Activated naive CD4-positive, alpha-beta T cell treated with anti-CD3 and anti-CD28 coated beads for 36 hours (primary cell): ENCODE measurements at regions of chr5 and their contacts with region 1.

Region 1: DNA sequence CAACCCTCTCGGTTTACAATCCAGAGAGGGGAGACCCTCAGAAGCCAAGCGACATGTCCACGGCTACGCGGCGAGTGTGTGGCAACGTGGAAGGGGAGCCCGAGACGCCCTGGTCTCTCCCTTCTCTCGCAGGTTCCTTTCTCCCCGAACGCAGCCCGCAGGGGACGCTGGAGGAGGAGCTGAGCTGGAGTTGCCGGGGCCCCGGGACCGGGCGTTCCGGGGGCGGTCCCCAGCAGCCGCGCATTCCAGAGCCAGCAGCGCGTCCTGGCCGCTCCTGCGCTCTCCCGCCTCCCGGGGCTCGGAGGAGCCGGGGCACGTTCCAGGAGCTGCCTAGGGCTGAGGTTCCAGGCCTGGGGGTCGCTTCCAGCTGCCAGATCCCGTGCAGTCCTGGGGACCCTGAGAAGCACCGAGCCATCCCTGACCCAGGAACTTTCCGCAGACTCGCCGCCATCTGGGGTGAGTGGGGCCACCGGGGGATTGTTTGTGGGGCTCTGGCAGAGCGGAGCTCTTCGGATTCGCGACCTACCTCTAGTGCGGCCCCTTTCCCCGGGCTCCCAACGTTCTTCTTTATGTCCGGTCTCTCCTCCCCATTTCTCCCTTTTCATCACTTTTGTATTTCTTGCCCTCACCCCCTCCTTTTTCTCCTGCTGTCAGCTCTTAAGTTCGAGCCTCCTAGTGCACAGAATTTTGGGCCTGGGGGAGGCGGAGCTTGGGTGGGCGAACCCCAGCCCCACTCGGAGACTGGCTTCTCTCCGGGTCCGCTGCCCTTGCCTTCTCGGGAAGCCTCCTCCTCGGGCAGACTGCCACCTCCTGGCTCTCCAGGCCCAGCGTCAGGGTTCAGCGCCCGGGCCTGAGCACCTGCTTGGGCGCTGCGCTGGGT is at the start of gene SMIM3:
- DNase-seq: peak; percentile 86
- H3K4me3 Mint-ChIP-seq: peak within 1 kb of the TSS; percentile 99
- H3K27ac Mint-ChIP-seq: peak within 1 kb of the TSS; percentile 93
- H3K4me1 Mint-ChIP-seq: peaks cover 48% of the 10 kb centered on the region
- H3K27me3 Mint-ChIP-seq: no peaks in the 10 kb centered on the region
- total RNA-seq, gene SMIM3: 32.9 to 37.4 TPM

Region 2: DNA sequence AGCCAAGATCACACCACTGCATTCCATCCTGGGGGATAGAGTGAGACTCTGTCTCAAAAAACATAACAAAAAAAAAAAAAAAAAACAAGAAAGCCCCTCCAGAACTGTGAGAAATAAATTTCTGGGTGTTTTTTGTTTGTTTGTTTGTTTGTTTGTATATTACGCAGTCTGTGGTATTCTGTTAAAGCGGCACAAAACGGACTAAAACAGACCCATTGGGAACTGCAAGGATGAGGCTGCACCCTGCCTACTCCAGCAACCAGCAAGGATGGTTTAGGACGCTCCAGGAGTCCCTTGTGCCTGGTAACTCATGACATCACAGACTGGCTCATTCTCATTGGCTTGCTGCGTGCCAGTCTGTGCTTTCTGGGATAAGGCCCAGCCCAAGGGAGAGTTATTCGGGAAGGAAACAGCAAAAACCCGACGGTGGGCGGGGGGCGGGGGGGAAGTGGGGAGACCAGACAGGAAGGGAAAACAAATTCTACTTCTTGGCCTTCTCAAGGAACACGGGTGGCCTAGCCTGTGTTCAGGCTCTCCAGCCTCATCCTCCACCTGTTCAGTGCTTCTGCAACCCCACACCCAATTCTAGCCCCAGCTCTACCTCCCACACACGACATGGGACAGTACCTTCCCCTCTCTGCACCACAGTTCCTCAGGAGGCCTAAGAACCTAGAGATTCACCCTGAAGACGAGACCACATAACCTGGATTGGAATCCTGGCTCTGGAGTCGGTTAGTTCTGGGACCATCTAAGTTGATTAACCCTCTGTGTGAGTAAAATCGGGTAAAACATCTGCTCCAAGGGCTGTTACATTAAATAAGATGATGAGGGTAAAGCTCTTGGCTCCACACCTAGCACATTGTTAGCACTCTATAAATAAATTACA is 368.9 kb before region 1 on chr5:
- CTCF ChIA-PET with region 1: no interaction called
- intact Hi-C with region 1: loop called (anchors 5 kb)
- DNase-seq: peak; percentile 70
- H3K4me3 Mint-ChIP-seq: peak overlapping the region; percentile 98
- H3K27ac Mint-ChIP-seq: peak overlapping the region; percentile 98
- H3K4me1 Mint-ChIP-seq: peaks cover 39% of the 10 kb centered on the region
- H3K27me3 Mint-ChIP-seq: no peaks in the 10 kb centered on the region

Region 3: GRCh38 chr5:150656191-150657132 is 122.3 kb before region 1 on chr5:
- CTCF ChIA-PET with region 1: interaction called, 10 read pairs
- intact Hi-C with region 1: loop called (anchors 1 kb)
- DNase-seq: peak; percentile 77
- H3K4me3 Mint-ChIP-seq: peak overlapping the region; percentile 76
- H3K27ac Mint-ChIP-seq: no peak overlapping the region
- H3K4me1 Mint-ChIP-seq: peaks cover 2% of the 10 kb centered on the region
- H3K27me3 Mint-ChIP-seq: no peaks in the 10 kb centered on the region

Region 4: DNA sequence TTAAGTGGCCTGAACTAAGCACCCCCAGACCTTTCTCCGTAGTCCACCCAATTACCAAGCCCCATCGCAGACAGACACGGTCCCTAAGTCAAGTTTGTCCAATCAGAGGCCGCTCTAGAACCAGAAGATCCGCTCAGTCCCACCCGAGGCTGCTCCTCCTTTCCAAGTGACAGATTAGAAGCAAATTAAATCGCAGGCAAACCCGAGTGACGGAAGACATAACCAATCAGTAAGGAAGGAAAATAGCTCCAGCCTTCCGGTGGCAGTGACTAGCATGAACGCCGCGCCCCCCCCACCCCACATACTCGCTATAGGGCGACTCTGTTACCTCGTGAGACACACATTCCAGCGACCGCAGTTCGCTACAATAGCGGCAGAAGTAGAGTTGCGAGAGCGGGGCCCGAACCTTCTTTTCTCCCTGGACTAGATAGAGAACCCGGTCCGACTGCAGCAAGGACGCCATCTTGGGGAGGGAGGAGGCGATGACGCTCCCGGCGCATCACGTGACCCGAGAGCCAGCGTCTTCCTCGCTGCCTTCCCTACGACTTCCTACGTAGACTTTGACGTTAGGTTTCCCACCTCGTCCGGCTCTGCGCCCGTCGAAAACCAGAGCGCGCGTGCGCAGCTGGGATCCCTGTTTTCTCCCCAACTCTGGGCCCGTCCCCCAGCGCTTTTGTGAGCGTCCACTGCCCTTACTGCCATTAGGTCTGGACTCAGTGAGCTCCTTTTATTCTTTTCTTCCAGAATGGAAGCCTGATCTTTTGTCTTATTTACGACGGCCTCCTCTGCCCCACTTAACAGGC is 20.0 kb before region 1 on chr5 and contains the start of gene DCTN4:
- CTCF ChIA-PET with region 1: interaction called, 22 read pairs
- intact Hi-C with region 1: loop called (anchors 1 kb)
- DNase-seq: peak; percentile 96
- H3K4me3 Mint-ChIP-seq: no peak within 1 kb of the TSS
- H3K27ac Mint-ChIP-seq: no peak within 1 kb of the TSS
- H3K4me1 Mint-ChIP-seq: peaks cover 38% of the 10 kb centered on the region
- H3K27me3 Mint-ChIP-seq: no peaks in the 10 kb centered on the region
- total RNA-seq, gene DCTN4: 41.0 to 47.7 TPM

Region 5: GRCh38 chr5:150846654-150847333 is 68.0 kb after region 1 on chr5:
- CTCF ChIA-PET with region 1: interaction called, 31 read pairs
- intact Hi-C with region 1: loop called (anchors 1 kb)
- DNase-seq: peak; percentile 83
- H3K4me3 Mint-ChIP-seq: peak overlapping the region; percentile 79
- H3K27ac Mint-ChIP-seq: peak overlapping the region; percentile 80
- H3K4me1 Mint-ChIP-seq: peaks cover 25% of the 10 kb centered on the region
- H3K27me3 Mint-ChIP-seq: no peaks in the 10 kb centered on the region

Region 6: DNA sequence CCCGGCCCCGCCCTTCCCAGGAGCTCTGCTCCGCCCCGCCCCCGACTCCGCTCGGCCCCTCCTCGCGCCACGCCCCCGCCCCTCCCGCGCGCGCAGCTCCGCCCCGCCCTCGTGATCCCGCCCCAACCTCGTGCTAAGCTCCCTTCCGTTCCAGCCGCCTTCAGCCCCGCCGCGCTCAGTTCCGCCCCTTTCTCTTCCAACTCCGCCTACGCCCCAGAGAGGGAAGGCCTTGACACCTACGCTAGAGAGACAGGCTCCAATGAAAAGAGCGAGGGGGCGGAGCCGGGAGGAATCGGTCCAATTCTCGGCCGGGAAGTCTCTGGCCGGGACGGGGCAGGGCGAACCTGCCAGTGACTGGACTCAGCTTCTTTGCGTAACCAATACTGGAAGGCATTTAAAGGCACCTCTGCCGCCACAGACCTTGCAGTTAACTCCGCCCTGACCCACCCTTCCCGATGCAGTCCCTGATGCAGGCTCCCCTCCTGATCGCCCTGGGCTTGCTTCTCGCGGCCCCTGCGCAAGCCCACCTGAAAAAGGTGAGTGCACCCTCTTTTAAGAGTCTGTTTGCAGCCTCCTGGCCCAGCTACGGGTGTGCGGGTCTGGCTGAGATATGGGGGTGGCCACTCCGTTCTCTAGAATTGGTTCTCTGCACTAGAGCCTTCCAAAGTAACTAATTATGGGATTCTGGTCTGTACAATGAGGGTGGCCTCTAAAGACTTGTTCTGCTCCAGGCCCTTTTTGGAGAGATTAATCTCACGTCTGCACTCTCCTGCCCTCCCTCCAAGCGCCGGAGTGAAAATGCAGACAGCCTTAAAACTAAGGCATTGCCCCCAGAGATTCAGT is 474.2 kb after region 1 on chr5 and contains the start of gene GM2A:
- CTCF ChIA-PET with region 1: no interaction called
- intact Hi-C with region 1: loop called (anchors 5 kb)
- DNase-seq: peak; percentile 99
- H3K4me3 Mint-ChIP-seq: peak within 1 kb of the TSS; percentile 89
- H3K27ac Mint-ChIP-seq: peak within 1 kb of the TSS; percentile 90
- H3K4me1 Mint-ChIP-seq: peaks cover 43% of the 10 kb centered on the region
- H3K27me3 Mint-ChIP-seq: no peaks in the 10 kb centered on the region
- total RNA-seq, gene GM2A: 21.1 to 21.8 TPM